ENCODE measurements at regions of chr2 and their contacts with region 1.

Region 1: GRCh38 chr2:19347619-19348562 is 10.5 kb downstream of the OSR1 start:
- DNase-seq: peak; percentile 88 to 99 (median 90)

Region 2: GRCh38 chr2:18987592-18988073 is 360.3 kb before region 1 on chr2:
- intact Hi-C with region 1: loop called (anchors 10 kb)
- DNase-seq: peak in 5 of 10 donors; percentile 16 to 82 (median 45)

Region 3: DNA sequence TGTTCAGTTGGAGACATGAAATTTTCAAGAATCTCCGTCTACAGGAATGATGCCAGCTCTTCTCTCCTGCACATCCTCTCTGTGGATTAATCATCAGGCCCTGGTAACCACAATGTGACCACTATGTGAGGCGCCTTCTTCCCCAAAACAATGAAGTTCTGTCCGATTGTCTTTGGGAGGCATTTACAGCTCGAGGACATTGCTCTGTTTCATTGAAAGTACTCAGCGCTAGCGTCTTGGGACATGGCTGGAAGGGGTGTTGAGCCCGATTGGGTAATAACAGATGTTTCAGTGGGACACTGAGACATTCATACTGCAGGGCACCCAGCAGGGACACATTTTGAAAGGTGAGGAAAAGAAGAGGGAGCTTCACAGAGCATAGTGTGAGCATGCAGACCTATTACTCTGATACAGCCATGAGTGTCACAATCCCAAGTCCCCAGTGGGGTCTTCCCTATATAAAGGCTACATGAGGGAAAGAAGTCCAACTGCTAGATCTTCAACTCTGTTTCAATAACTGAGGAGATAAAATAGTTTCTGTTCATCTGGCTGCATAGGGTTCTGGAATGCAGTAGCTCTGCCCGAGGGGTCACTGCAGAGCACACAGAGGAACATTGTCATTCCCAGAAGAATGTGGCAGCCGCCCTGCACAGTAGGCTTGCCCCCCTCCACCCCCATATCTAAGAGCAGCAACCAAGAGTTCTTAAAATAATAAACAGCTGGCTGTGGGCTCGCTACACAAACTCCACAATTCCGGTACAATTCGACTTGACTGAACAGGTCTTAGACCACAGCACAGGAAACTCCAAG is 226.7 kb before region 1 on chr2:
- intact Hi-C with region 1: loop called (anchors 10 kb)
- DNase-seq: peak in 4 of 10 donors; percentile 8 to 76 (median 36)

Region 4: GRCh38 chr2:19425419-19425818 is 77.5 kb after region 1 on chr2:
- intact Hi-C with region 1: no loop called
- DNase-seq: no peak

Measured in posterior cingulate gyrus (tissue), 11 donors.